ENCODE measurements at regions of chr6 and their contacts with region 1.

Region 1: GRCh38 chr6:63643862-63644261 is 8.3 kb downstream of the PHF3 start:
- DNase-seq: no peak
- H3K4me3 ChIP-seq: no peak overlapping the region
- H3K27ac ChIP-seq: no peak overlapping the region
- H3K4me1 ChIP-seq: peaks cover 17% of the 10 kb centered on the region
- H3K27me3 ChIP-seq: no peaks in the 10 kb centered on the region
- CTCF ChIP-seq: no peak

Region 2: DNA sequence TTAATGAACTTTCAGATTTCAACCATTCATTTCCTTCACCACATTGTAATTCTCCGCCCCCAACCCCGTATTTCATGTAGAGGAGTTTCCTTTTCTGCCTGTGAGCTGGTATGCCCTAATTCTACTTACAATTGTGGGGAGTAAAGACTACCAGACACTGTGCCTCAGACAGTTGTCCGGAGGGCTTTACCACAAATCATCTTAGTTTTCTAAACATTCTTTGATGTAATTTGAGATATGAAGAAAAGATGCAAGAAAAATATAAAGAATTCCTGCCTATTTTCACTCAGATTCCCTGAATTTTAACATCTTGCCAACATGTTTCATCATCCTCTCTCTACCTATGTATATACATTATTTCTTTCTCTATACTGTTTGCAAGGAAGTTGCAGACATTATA is 99.9 kb before region 1 on chr6:
- CTCF ChIA-PET with region 1: no interaction called
- POLR2A ChIA-PET with region 1: no interaction called
- intact Hi-C with region 1: no loop called
- DNase-seq: no peak
- H3K4me3 ChIP-seq: no peak overlapping the region
- H3K27ac ChIP-seq: no peak overlapping the region
- H3K4me1 ChIP-seq: peaks cover 3% of the 10 kb centered on the region; the same call in 1 of the 2 replicates
- H3K27me3 ChIP-seq: no peaks in the 10 kb centered on the region
- CTCF ChIP-seq: no peak

Region 3: GRCh38 chr6:63705707-63706106 is 61.8 kb after region 1 on chr6:
- CTCF ChIA-PET with region 1: no interaction called
- POLR2A ChIA-PET with region 1: no interaction called
- intact Hi-C with region 1: loop called (anchors 5 kb)
- DNase-seq: no peak
- H3K4me3 ChIP-seq: no peak overlapping the region
- H3K27ac ChIP-seq: no peak overlapping the region
- H3K4me1 ChIP-seq: no peaks in the 10 kb centered on the region
- H3K27me3 ChIP-seq: no peaks in the 10 kb centered on the region
- CTCF ChIP-seq: no peak